PC-3 (cell line): ENCODE measurements at regions of chr5 and their contacts with region 1.

Region 1: DNA sequence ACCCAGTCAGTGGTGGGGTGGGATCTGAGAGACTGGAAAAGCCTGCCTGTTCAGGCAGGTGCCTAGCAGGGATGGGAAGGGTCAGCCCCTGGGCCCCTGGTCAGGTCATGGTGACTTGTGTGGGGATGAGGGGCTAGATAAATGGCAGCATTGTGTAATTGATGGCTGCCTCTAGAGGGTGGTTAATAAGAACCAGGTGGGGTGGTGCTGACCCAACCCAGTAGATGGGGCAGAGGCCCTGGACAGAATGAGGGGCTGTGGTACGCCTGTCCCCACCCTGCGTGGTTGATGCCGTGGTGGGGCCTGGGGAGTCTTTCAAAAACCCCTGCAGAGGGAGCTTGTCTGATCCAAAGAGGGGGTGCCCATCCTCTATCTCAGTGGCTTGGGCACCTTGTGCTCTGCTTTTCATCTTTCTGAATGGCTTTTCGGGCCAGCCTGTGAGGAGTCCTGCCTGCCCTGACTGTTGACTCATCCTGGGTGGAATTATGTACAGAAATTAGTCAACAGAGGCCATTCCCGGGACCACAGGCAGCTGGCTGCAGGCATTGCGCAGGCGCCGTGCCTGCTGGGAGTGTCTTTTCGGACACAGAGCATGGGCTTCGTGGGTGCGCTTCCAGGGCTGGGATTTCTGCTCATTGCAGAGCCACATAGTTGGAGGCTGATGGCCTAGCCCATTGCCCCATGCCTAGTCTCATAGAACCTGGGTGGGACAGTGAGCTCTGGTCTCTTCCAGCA is 93.6 kb upstream of the PITX1 start:
- DNase-seq: peak; percentile 87
- ATAC-seq: peak; percentile 96
- H3K4me3 ChIP-seq: no peak overlapping the region
- H3K27ac ChIP-seq: peak overlapping the region; percentile 71
- H3K4me1 ChIP-seq: peaks cover 22% of the 10 kb centered on the region
- H3K27me3 ChIP-seq: no peaks in the 10 kb centered on the region
- CTCF ChIP-seq: no peak

Region 2: GRCh38 chr5:135085127-135085935 is 42.3 kb before region 1 on chr5:
- CTCF ChIA-PET with region 1: no interaction called
- POLR2A ChIA-PET with region 1: no interaction called
- intact Hi-C with region 1: loop called (anchors 5 kb)
- DNase-seq: peak; percentile 84
- ATAC-seq: peak; percentile 97
- H3K4me3 ChIP-seq: 0 out of 2 replicates have a peak overlapping the region, but pooled peaks have one; percentile 36
- H3K27ac ChIP-seq: peak overlapping the region; percentile 85
- H3K4me1 ChIP-seq: peaks cover 21% of the 10 kb centered on the region
- H3K27me3 ChIP-seq: no peaks in the 10 kb centered on the region
- CTCF ChIP-seq: no peak